ENCODE measurements at regions of chr17 and their contacts with region 1.

Region 1: GRCh38 chr17:63848834-63849700 is 6.6 kb upstream of the SMARCD2 start:
- DNase-seq: peak; percentile 97
- ATAC-seq: peak; percentile 96
- H3K4me3 ChIP-seq: peak overlapping the region; percentile 32 to 60 (median 53)
- H3K4me3 Mint-ChIP-seq: peak overlapping the region; percentile 88
- H3K27ac ChIP-seq: peak overlapping the region; percentile 65 to 84
- H3K27ac Mint-ChIP-seq: peak overlapping the region; percentile 91
- H3K4me1 ChIP-seq: peaks cover 7 to 19% of the 10 kb centered on the region in 2 donors
- H3K4me1 Mint-ChIP-seq: peaks cover 21% of the 10 kb centered on the region
- H3K27me3 ChIP-seq: no peaks in the 10 kb centered on the region
- H3K27me3 Mint-ChIP-seq: no peaks in the 10 kb centered on the region
- CTCF ChIP-seq: peak; percentile 84

Region 2: GRCh38 chr17:63859257-63859656 is 10.2 kb after region 1 on chr17:
- CTCF ChIA-PET with region 1: interaction called, 10 read pairs
- POLR2A ChIA-PET with region 1: no interaction called
- intact Hi-C with region 1: no loop called
- DNase-seq: no peak
- ATAC-seq: no peak
- H3K4me3 ChIP-seq: no peak overlapping the region
- H3K4me3 Mint-ChIP-seq: no peak overlapping the region
- H3K27ac ChIP-seq: no peak overlapping the region
- H3K27ac Mint-ChIP-seq: no peak overlapping the region
- H3K4me1 ChIP-seq: no peaks in the 10 kb centered on the region
- H3K4me1 Mint-ChIP-seq: no peaks in the 10 kb centered on the region
- H3K27me3 ChIP-seq: peaks cover 0 to 5% (median 2%) of the 10 kb centered on the region in 4 experiments
- H3K27me3 Mint-ChIP-seq: peaks cover 11% of the 10 kb centered on the region
- CTCF ChIP-seq: no peak